GM12878 (cell line): ENCODE measurements at regions of chr12 and their contacts with region 1.

Region 1: DNA sequence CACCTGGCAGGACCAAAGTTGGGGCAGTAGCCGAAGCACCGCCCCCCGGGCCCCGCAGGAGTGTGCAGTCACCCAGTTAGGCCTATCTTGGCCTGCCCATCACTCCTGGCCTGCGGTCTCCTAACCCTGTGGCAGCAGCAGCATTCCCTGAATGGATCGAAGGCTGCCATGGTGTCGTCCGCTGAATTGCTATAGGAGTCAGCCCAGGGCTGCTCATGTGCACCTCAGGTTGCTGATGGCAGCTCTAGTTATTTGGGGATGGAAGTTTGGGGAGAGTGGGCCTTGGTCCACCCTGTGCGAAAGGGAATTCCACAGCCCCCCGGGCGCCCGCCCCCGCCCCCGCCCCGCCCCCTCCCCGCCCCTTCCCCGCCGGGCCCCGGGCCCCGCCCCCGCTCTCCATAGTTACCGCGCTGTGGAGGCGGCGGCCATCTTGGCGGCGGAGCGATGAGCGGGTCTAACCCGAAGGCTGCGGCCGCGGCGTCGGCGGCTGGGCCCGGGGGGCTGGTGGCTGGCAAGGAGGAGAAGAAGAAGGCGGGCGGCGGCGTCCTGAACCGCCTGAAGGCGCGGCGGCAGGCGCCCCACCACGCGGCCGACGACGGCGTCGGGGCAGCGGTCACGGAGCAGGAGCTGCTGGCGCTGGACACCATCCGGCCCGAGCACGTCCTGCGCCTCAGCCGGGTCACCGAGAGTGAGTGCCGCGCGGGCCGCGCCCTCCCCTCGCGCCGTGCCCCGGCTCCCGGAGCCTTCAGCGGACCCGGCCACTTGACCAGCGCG is at the start of gene UNC119B:
- DNase-seq: no peak
- ATAC-seq: peak; percentile 88
- H3K4me3 ChIP-seq: peak within 1 kb of the TSS; percentile 68
- H3K27ac ChIP-seq: peak within 1 kb of the TSS; percentile 62
- H3K4me1 ChIP-seq: peaks cover 15% of the 10 kb centered on the region
- H3K27me3 ChIP-seq: no peaks in the 10 kb centered on the region
- CTCF ChIP-seq: no peak
- EP300 ChIP-seq: no peak
- POLR2A ChIP-seq: peak; percentile 79
- RAD21 ChIP-seq: no peak
- polyA plus RNA-seq, gene UNC119B: 4.3 to 8.5 TPM

Region 2: GRCh38 chr12:120625557-120626419 is 84.4 kb before region 1 on chr12:
- CTCF ChIA-PET with region 1: interaction called, 4 read pairs
- POLR2A ChIA-PET with region 1: no interaction called
- RAD21 ChIA-PET with region 1: interaction called, 4 read pairs
- SMC1A ChIA-PET with region 1: interaction called, 3 read pairs
- in situ Hi-C with region 1: no loop called
- intact Hi-C with region 1: loop called (anchors 5 kb)
- DNase-seq: peak; percentile 11
- ATAC-seq: peak; percentile 90
- H3K4me3 ChIP-seq: no peak overlapping the region; the same call in 1 of the 2 replicates
- H3K27ac ChIP-seq: no peak overlapping the region
- H3K4me1 ChIP-seq: no peaks in the 10 kb centered on the region
- H3K27me3 ChIP-seq: no peaks in the 10 kb centered on the region; a peak in 2 of 4 replicates
- CTCF ChIP-seq: peak in 2 of 3 experiments; percentile 30 to 40; a peak in 3 of 6 replicates
- EP300 ChIP-seq: no peak
- POLR2A ChIP-seq: no peak
- RAD21 ChIP-seq: 0 out of 2 replicates have a peak, but pooled peaks have one; percentile 5

Region 3: DNA sequence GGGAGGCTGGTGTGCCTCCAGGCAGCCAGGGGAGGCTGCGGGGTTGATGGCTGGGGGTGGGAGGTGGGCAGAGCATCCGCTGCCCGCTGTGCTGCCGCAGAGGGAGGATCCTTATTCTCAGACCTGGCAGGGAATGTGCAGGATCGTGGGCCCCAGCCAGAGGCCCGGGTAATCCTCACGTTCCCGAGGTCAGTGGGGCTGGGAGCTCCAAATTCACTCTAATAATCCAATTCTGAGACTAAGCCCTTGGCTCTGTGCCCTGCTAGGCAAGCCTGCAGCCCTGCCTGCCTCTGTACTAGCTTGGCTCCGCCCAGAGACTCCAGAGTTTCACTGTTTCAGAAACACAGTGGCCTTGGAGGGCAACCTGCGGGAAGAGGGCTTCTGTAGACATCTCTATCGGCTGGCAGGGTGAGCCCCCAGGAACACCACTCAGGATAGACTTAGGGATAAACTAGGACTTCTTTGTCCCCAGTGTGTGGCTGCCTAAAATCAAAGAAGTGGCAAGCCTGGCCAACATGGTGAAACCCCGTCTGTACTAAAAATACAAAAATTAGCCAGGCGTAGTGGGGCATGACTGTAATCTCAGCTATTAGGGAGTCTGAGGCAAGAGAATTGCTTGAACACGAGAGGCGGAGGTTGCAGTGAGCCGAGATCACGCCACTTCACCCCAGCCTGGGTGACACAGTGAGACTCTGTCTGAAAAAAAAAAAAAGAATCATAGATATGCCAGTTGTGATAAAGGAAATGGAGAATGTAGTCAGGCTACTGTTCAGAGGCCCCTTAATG is 41.0 kb before region 1 on chr12:
- CTCF ChIA-PET with region 1: interaction called, 5 read pairs
- POLR2A ChIA-PET with region 1: no interaction called
- RAD21 ChIA-PET with region 1: interaction called, 10 read pairs
- SMC1A ChIA-PET with region 1: interaction called, 5 read pairs
- in situ Hi-C with region 1: no loop called
- intact Hi-C with region 1: no loop called
- DNase-seq: peak; percentile 79
- ATAC-seq: peak; percentile 84
- H3K4me3 ChIP-seq: peak overlapping the region; percentile 39
- H3K27ac ChIP-seq: peak overlapping the region; percentile 46
- H3K4me1 ChIP-seq: peaks cover 38% of the 10 kb centered on the region
- H3K27me3 ChIP-seq: no peaks in the 10 kb centered on the region
- CTCF ChIP-seq: no peak
- EP300 ChIP-seq: no peak; a peak in 1 of 4 replicates
- POLR2A ChIP-seq: no peak
- RAD21 ChIP-seq: no peak

Region 4: GRCh38 chr12:120698665-120699064 is 11.6 kb before region 1 on chr12:
- CTCF ChIA-PET with region 1: interaction called, 4 read pairs
- POLR2A ChIA-PET with region 1: interaction called, 21 read pairs
- RAD21 ChIA-PET with region 1: interaction called, 3 read pairs
- SMC1A ChIA-PET with region 1: interaction called, 10 read pairs
- in situ Hi-C with region 1: no loop called
- intact Hi-C with region 1: no loop called
- DNase-seq: no peak
- ATAC-seq: no peak
- H3K4me3 ChIP-seq: no peak overlapping the region
- H3K27ac ChIP-seq: no peak overlapping the region
- H3K4me1 ChIP-seq: no peaks in the 10 kb centered on the region
- H3K27me3 ChIP-seq: no peaks in the 10 kb centered on the region
- CTCF ChIP-seq: no peak
- EP300 ChIP-seq: no peak
- POLR2A ChIP-seq: no peak
- RAD21 ChIP-seq: no peak

Region 5: GRCh38 chr12:120735181-120735580 is 25.0 kb after region 1 on chr12:
- CTCF ChIA-PET with region 1: no interaction called
- POLR2A ChIA-PET with region 1: no interaction called
- RAD21 ChIA-PET with region 1: no interaction called
- SMC1A ChIA-PET with region 1: no interaction called
- in situ Hi-C with region 1: no loop called
- intact Hi-C with region 1: no loop called
- DNase-seq: no peak
- ATAC-seq: no peak
- H3K4me3 ChIP-seq: no peak overlapping the region
- H3K27ac ChIP-seq: no peak overlapping the region
- H3K4me1 ChIP-seq: no peaks in the 10 kb centered on the region
- H3K27me3 ChIP-seq: no peaks in the 10 kb centered on the region
- CTCF ChIP-seq: no peak
- EP300 ChIP-seq: no peak
- POLR2A ChIP-seq: no peak
- RAD21 ChIP-seq: no peak

Region 6: GRCh38 chr12:121005346-121005815 is 295.2 kb after region 1 on chr12:
- CTCF ChIA-PET with region 1: no interaction called
- POLR2A ChIA-PET with region 1: no interaction called
- RAD21 ChIA-PET with region 1: no interaction called
- SMC1A ChIA-PET with region 1: no interaction called
- in situ Hi-C with region 1: no loop called
- intact Hi-C with region 1: no loop called
- DNase-seq: no peak
- ATAC-seq: peak; percentile 87
- H3K4me3 ChIP-seq: no peak overlapping the region
- H3K27ac ChIP-seq: no peak overlapping the region
- H3K4me1 ChIP-seq: no peaks in the 10 kb centered on the region
- H3K27me3 ChIP-seq: no peaks in the 10 kb centered on the region
- CTCF ChIP-seq: peak; percentile 63 to 77 (median 73)
- EP300 ChIP-seq: no peak
- POLR2A ChIP-seq: no peak
- RAD21 ChIP-seq: peak; percentile 53